Activated CD4-positive, alpha-beta T cell treated with anti-CD3 and anti-CD28 coated beads for 36 hours (primary cell): ENCODE measurements at regions of chr5 and their contacts with region 1.

Region 1: DNA sequence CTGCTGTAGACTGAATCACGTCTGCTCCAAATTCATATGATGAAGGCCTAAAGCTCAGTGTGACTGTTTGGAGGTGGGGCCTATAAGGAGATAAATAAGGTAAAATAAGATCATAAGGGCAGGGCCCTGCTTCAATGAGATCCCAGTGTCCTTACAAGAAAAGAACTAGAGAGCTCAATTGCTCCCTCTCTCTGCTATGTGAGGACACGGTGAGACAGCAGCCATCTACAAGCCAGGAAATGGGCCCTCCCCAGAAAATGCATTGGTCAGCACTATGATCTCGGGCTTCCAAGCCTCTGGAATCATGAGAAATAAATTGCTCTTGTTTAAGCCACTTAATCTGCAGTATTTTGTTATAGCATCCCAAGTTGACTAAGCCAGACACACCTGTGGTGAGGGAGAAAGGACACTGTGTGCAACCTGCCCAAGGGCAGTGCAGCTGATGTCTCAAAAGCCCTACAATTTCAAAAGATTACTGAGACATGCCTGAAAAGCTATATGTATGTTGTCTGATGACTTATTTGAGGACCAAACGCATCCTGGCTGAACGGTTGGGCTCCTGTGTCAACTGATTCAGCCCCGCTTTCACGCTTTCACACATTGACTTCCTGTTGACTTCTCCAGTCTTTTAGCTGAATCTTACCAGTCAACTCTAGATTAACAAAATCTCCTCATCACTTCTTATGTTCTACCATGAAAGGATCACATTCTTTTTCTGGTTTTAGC is 13.2 kb downstream of the GZMK start:
- DNase-seq: peak; percentile 87
- ATAC-seq: peak; percentile 95
- H3K4me3 Mint-ChIP-seq: peak overlapping the region; percentile 16
- H3K27ac Mint-ChIP-seq: peak overlapping the region; percentile 82
- H3K4me1 Mint-ChIP-seq: peaks cover 28% of the 10 kb centered on the region
- H3K27me3 Mint-ChIP-seq: no peaks in the 10 kb centered on the region

Region 2: DNA sequence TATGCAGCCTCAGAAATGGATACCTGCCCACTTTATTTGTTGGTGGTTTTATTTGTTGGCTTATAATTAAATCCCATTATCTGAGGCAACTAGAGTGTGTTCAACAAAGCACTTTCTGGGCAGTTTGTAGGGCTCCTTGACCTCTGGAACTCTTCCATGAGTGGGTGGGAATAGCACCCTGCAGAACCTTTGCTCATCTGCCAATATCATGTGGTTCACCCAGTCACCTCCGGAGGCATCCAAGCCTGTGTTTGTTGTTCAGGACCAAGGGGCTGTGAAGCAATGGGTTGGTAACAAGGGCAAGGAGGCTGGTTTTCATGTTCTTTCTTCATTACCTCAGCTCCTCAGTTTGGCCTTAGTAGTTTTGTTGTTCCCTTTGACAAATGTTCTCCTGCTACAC is 1162.8 kb before region 1 on chr5:
- CTCF ChIA-PET with region 1: no interaction called
- POLR2A ChIA-PET with region 1: no interaction called
- intact Hi-C with region 1: no loop called
- DNase-seq: no peak
- ATAC-seq: no peak
- H3K4me3 Mint-ChIP-seq: no peak overlapping the region
- H3K27ac Mint-ChIP-seq: no peak overlapping the region
- H3K4me1 Mint-ChIP-seq: no peaks in the 10 kb centered on the region
- H3K27me3 Mint-ChIP-seq: no peaks in the 10 kb centered on the region

Region 3: GRCh38 chr5:54985301-54986268 is 51.6 kb before region 1 on chr5 and contains the start of gene ESM1:
- CTCF ChIA-PET with region 1: no interaction called
- POLR2A ChIA-PET with region 1: no interaction called
- intact Hi-C with region 1: loop called in 1 of 2 experiments (anchors 5 kb)
- DNase-seq: peak; percentile 9
- ATAC-seq: peak; percentile 60
- H3K4me3 Mint-ChIP-seq: no peak within 1 kb of the TSS
- H3K27ac Mint-ChIP-seq: peak within 1 kb of the TSS; percentile 26
- H3K4me1 Mint-ChIP-seq: peaks cover 38% of the 10 kb centered on the region
- H3K27me3 Mint-ChIP-seq: peaks cover 12% of the 10 kb centered on the region
- total RNA-seq, gene ESM1: not detected

Region 4: DNA sequence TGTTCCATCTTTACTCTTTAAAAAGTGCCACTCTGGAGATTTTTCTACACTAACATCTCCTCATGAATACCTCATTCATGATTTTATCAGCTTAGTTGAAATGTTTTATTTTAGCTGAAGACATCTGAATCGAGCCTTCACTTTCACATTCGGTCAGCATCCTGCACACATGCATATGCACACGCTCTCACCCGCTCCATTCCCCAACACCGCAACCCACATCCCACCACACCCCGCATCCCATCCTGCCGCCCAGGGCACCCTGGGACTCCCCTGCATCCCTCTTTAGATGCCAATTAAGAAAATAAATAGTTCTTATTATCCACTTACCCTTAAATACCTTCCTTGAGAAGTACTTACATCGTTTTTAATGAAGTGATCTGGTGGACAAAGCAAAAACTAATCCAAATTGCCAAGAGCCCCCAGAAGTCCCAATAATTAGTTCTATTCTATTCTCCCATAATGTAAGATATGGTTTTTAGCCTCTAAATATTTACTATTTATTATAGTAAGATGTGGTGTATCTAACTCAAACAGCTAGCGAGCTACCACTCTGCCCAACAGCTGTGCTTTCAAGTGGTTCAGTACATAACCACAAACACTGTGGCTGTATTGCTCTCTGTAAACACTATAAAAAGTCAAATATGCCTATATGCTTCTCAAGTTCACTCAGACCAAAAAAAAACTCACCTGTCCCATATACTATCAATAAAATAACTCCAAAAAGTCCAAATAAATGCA is 25.0 kb after region 1 on chr5:
- CTCF ChIA-PET with region 1: no interaction called
- POLR2A ChIA-PET with region 1: interaction called, 3 read pairs
- intact Hi-C with region 1: loop called in 1 of 2 experiments (anchors 1 kb)
- DNase-seq: peak; percentile 81
- ATAC-seq: peak; percentile 83
- H3K4me3 Mint-ChIP-seq: peak overlapping the region; percentile 52
- H3K27ac Mint-ChIP-seq: peak overlapping the region; percentile 80
- H3K4me1 Mint-ChIP-seq: peaks cover 48% of the 10 kb centered on the region
- H3K27me3 Mint-ChIP-seq: peaks cover 4% of the 10 kb centered on the region

Region 5: GRCh38 chr5:55102348-55102747 is 65.1 kb after region 1 on chr5 and contains the start of gene GZMA:
- CTCF ChIA-PET with region 1: interaction called, 3 read pairs
- POLR2A ChIA-PET with region 1: interaction called, 4 read pairs
- intact Hi-C with region 1: loop called (anchors 1 to 5 kb)
- DNase-seq: peak; percentile 39
- ATAC-seq: peak; percentile 84
- H3K4me3 Mint-ChIP-seq: peak within 1 kb of the TSS; percentile 50
- H3K27ac Mint-ChIP-seq: peak within 1 kb of the TSS; percentile 74
- H3K4me1 Mint-ChIP-seq: peaks cover 65% of the 10 kb centered on the region
- H3K27me3 Mint-ChIP-seq: peaks cover 19% of the 10 kb centered on the region
- total RNA-seq, gene GZMA: 2.4 TPM